Activated naive CD4-positive, alpha-beta T cell treated with anti-CD3 and anti-CD28 coated beads for 36 hours (primary cell): ENCODE measurements at regions of chr11 and their contacts with region 1.

Region 1: GRCh38 chr11:9757809-9758636 is 94.1 kb downstream of the SWAP70 start:
- DNase-seq: peak; percentile 94
- H3K4me3 Mint-ChIP-seq: peak overlapping the region; percentile 73
- H3K27ac Mint-ChIP-seq: peak overlapping the region; percentile 81
- H3K4me1 Mint-ChIP-seq: peaks cover 42% of the 10 kb centered on the region
- H3K27me3 Mint-ChIP-seq: no peaks in the 10 kb centered on the region

Region 2: GRCh38 chr11:9565822-9566560 is 192.0 kb before region 1 on chr11:
- CTCF ChIA-PET with region 1: no interaction called
- intact Hi-C with region 1: loop called (anchors 1 kb)
- DNase-seq: peak; percentile 81
- H3K4me3 Mint-ChIP-seq: no peak overlapping the region
- H3K27ac Mint-ChIP-seq: peak overlapping the region; percentile 65
- H3K4me1 Mint-ChIP-seq: peaks cover 9% of the 10 kb centered on the region
- H3K27me3 Mint-ChIP-seq: no peaks in the 10 kb centered on the region

Region 3: DNA sequence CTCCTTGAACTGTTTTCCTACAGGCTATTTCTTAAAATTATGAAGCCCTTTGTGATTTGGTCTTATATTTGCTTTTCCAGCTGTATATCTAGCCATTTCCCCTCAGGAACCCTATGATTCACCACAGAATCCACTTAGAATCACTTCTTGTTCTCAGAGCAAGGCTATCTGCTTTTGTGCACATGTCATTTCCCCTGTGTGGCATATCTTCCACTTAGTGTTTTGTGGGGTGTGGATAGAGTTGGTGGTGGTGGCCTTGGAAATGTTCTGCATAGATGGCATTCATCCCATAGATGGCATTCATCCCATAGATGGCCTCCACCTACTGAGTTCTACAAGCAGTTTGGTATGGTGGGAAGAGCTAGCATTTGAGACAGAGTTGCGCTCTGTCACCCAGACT is 49.5 kb before region 1 on chr11:
- CTCF ChIA-PET with region 1: no interaction called
- intact Hi-C with region 1: no loop called
- DNase-seq: no peak
- H3K4me3 Mint-ChIP-seq: no peak overlapping the region
- H3K27ac Mint-ChIP-seq: no peak overlapping the region
- H3K4me1 Mint-ChIP-seq: peaks cover 1% of the 10 kb centered on the region
- H3K27me3 Mint-ChIP-seq: no peaks in the 10 kb centered on the region

Region 4: GRCh38 chr11:9774591-9775397 is 16.8 kb after region 1 on chr11:
- CTCF ChIA-PET with region 1: no interaction called
- intact Hi-C with region 1: no loop called
- DNase-seq: no peak
- H3K4me3 Mint-ChIP-seq: no peak overlapping the region
- H3K27ac Mint-ChIP-seq: no peak overlapping the region
- H3K4me1 Mint-ChIP-seq: no peaks in the 10 kb centered on the region
- H3K27me3 Mint-ChIP-seq: no peaks in the 10 kb centered on the region

Region 5: GRCh38 chr11:9840460-9841004 is 82.5 kb after region 1 on chr11:
- CTCF ChIA-PET with region 1: interaction called, 3 read pairs
- intact Hi-C with region 1: loop called (anchors 5 kb)
- DNase-seq: no peak
- H3K4me3 Mint-ChIP-seq: no peak overlapping the region
- H3K27ac Mint-ChIP-seq: peak overlapping the region; percentile 59
- H3K4me1 Mint-ChIP-seq: peaks cover 41% of the 10 kb centered on the region
- H3K27me3 Mint-ChIP-seq: no peaks in the 10 kb centered on the region

Region 6: DNA sequence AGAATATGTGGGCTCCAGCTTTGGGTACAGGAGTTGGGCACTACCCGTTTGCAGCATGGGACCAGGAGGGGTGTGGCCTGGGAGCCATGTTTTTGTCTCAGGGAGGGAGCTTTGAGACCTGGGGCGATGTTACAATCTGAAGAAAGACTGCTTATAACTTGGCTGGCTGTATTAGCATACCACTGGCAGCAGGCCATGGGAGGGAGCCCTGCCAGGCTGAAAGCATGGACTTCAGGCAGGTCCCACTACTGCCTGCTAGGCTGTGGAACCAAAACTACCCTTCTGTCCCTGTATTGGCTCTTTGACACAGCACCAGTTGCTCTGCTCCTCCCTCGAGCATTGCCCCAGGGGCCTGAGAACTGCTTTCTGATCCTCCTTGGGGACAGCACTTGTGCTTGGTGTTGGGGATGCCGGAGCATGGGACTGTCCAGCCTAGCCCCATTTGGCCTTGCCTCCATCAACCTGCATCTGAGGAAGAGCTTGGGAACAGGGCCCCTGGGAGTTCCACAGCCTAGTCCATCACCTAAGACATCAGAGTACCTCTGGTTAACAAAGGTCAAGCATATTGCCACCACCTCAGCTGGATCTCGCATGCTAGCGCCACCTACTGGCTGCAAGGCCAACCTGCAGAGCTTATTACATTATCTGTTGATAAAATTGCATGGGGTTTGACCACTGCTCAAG is 318.6 kb after region 1 on chr11:
- CTCF ChIA-PET with region 1: interaction called, 4 read pairs
- intact Hi-C with region 1: loop called (anchors 2 kb)
- DNase-seq: peak; percentile 49
- H3K4me3 Mint-ChIP-seq: no peak overlapping the region
- H3K27ac Mint-ChIP-seq: no peak overlapping the region
- H3K4me1 Mint-ChIP-seq: no peaks in the 10 kb centered on the region
- H3K27me3 Mint-ChIP-seq: no peaks in the 10 kb centered on the region

Region 7: DNA sequence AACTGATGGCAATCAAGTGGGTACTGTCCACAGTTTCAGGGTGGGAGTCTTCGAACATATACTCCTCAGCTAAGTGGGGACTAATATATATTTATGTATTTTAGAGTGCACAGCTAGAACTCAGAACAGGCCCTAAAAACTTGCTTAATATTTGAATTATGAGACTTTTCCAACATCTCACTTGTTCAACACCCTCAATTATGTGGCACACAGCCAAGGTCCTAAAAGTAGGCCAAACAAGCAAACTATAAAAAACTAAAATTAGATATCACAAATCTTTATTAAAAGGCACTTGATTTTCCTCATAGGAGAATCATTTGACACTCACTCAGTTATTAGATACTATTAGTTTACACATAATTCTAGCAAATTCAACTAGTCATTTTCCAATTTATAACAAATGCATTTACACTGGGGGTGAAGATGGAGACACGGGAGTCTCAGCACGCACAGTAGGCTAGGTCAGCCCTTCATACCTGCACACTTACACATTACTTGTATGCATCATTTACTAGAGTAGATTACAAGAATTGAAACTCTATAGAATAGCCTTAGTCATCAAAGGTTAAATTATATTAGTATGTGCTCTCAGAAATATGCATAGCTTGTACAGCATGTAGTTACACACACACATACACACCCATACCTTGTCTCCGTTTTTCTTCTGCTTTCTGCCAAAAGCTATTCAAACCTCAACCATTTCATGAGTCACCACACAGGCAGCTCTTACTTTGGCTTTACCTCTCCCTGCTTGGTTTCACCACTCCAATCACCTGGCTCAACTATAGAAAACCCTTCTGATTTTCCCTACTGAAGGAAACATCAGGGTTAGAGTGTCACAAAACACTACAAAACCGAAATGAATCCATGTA is 364.5 kb after region 1 on chr11:
- CTCF ChIA-PET with region 1: no interaction called
- intact Hi-C with region 1: no loop called
- DNase-seq: no peak
- H3K4me3 Mint-ChIP-seq: no peak overlapping the region
- H3K27ac Mint-ChIP-seq: no peak overlapping the region
- H3K4me1 Mint-ChIP-seq: peaks cover 4% of the 10 kb centered on the region
- H3K27me3 Mint-ChIP-seq: no peaks in the 10 kb centered on the region

Region 8: GRCh38 chr11:10322830-10323792 is 565.1 kb after region 1 on chr11:
- CTCF ChIA-PET with region 1: interaction called, 6 read pairs
- intact Hi-C with region 1: loop called (anchors 1 kb)
- DNase-seq: peak; percentile 69
- H3K4me3 Mint-ChIP-seq: peak overlapping the region; percentile 38
- H3K27ac Mint-ChIP-seq: peak overlapping the region; percentile 69
- H3K4me1 Mint-ChIP-seq: peaks cover 12% of the 10 kb centered on the region
- H3K27me3 Mint-ChIP-seq: no peaks in the 10 kb centered on the region

Region 9: DNA sequence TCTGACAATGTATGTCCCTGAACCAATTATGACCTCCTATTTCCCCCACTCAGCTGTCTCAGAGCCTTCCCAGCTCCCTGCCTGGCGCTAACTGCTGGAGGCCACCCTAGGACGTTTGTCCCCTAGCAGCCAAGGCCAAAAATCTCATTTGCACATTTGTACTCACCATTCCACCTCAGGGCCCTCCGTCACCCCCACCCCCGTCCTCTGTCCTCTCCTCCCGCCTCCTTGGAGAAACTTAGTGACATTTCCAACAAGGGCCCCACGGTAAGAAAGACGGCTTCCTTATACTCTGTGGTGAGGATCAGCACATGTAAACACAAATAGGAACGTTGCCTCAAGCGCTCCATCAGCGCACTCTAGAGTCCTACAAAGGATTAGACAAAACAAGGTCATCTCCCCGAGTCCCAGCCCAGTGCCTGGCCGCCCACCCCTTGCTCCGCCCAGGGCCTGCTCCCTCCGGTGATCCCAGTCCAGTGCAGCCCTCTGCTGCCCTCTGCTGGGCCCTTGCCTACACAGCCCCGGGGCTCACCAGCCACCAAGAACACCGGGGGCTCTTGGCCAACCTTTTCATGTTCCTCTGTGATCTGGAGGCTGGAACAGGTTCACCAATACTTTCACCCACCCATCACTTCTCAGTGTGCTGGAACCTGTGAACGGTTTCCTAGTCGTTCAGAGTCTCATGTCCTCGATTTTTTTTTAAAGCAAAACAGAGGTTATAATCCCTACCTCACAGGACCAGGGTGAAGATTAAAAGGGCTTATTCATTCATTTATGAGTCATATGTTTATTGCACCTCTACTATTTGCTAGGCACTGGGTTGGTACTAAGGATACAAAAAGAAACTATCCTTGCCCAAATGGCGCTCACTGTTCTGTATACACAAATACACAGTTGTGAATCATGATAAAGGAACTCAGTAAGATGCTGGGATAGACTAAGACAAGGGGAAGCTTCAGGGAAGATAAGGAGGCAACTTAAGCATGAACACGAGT is 977.8 kb after region 1 on chr11:
- CTCF ChIA-PET with region 1: no interaction called
- intact Hi-C with region 1: loop called (anchors 5 kb)
- DNase-seq: peak; percentile 90
- H3K4me3 Mint-ChIP-seq: peak overlapping the region; percentile 54
- H3K27ac Mint-ChIP-seq: no peak overlapping the region
- H3K4me1 Mint-ChIP-seq: peaks cover 5% of the 10 kb centered on the region
- H3K27me3 Mint-ChIP-seq: peaks cover 6% of the 10 kb centered on the region